Activated CD8-positive, alpha-beta T cell treated with anti-CD3 and anti-CD28 coated beads for 36 hours (primary cell): ENCODE measurements at regions of chr11 and their contacts with region 1.

Region 1: DNA sequence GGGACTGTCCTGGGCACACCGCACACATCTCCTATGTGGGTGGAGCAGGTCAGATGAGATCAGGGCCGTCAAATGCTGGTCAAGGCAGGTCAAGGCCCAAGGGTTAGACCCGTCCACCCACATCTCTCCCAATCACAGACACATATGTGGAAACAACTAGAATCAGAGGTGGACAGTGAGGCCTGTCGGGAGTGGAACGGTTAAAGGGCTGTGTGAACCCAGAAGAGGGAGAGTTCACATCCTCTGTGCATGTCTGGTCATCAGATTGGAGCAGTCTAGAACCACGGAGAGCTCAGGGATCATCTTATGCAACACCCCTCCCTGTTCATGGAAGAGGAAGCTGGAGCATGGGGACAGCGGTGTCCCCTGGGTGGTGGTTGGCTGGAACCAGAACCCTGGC is 5.9 kb downstream of the ARL2 start:
- DNase-seq: no peak
- ATAC-seq: no peak
- H3K4me3 Mint-ChIP-seq: no peak overlapping the region
- H3K27ac Mint-ChIP-seq: no peak overlapping the region
- H3K4me1 Mint-ChIP-seq: peaks cover 17% of the 10 kb centered on the region
- H3K27me3 Mint-ChIP-seq: no peaks in the 10 kb centered on the region
- CTCF ChIP-seq: no peak

Region 2: DNA sequence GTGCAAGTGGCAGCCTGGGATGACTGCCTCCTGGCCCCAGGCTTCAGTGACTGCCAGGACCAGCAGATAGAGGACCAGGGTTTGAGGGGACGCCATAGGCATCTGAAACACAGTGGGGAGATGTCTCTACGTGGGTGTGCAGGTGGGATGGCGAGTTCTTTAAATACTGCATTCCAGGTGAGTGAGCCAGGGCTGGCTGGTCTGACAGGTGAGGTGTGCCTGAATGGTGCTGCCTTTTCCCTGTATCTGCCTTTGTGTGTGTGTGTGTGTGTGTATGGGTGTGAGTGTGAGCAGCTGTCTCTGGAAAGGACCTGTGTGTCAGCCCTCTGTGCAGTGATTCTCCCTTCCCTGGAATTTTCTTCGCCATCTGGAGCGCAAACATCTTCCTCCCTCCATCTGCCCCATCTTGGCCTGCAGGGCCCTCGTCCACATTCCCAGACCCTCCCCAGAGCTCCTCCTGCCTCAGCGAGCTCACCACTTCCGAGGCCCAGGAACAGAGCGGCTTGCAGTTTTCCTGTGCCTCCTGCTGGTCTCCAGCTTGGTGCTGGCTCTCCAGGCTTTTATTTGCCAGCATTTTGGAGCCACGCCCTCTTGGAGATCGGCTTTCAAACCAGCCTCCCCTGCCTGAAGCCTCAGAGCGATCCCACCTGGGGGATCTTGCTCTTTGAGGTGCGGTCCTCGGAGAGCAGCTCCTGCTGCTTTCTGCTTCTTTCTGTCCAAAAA is 84.3 kb before region 1 on chr11 and contains the start of gene GPHA2:
- CTCF ChIA-PET with region 1: no interaction called
- POLR2A ChIA-PET with region 1: no interaction called
- intact Hi-C with region 1: no loop called
- DNase-seq: no peak
- ATAC-seq: no peak
- H3K4me3 Mint-ChIP-seq: no peak within 1 kb of the TSS
- H3K27ac Mint-ChIP-seq: no peak within 1 kb of the TSS
- H3K4me1 Mint-ChIP-seq: no peaks in the 10 kb centered on the region
- H3K27me3 Mint-ChIP-seq: peaks cover 2% of the 10 kb centered on the region
- CTCF ChIP-seq: no peak
- total RNA-seq, gene GPHA2: not detected

Region 3: GRCh38 chr11:64951529-64951928 is 68.3 kb before region 1 on chr11:
- CTCF ChIA-PET with region 1: no interaction called
- POLR2A ChIA-PET with region 1: no interaction called
- intact Hi-C with region 1: no loop called
- DNase-seq: no peak
- ATAC-seq: no peak
- H3K4me3 Mint-ChIP-seq: no peak overlapping the region
- H3K27ac Mint-ChIP-seq: no peak overlapping the region
- H3K4me1 Mint-ChIP-seq: no peaks in the 10 kb centered on the region
- H3K27me3 Mint-ChIP-seq: peaks cover 7% of the 10 kb centered on the region
- CTCF ChIP-seq: no peak

Region 4: DNA sequence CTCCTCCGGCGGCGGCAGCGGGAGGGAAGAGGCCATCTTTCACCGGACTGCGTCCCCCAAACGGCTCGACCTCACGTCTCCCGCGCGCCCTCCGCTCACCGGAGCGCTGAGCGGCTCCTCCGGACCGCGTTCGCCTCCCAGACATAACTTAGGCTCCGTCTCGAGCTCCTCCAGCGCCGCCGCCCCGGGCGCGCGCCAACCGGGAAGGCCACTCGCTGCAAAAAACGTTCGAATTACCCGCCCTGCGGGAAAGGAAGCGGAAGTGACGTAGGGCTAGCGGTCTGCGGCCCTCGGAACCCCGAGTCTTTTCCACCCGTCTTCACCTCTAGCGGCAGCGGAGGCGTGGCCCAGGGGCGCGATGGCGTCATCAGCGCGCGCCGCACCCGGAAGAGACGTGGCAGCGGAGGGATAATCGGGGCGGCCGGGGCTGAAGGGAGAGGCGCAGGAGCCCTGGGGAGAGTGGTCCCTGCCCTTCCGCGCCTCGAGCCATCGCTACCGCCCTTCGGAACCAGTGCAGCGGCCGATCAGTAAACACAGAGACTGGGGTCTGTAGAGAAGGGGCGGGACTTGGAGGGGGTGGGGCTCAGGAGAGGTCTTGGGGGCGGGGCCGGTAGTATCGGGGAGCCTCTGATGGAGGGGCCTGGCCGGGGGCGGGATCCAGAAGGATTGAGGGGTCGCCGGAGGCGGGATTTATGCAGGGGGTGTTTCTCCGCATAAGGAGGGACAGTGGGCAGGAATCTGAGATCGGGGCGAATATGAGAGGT is 64.2 kb after region 1 on chr11 and contains the starts of genes CDCA5 and ZFPL1:
- CTCF ChIA-PET with region 1: interaction called, 10 read pairs
- POLR2A ChIA-PET with region 1: interaction called, 7 read pairs
- intact Hi-C with region 1: loop called (anchors 5 kb)
- DNase-seq: peak; percentile 96
- ATAC-seq: peak; percentile 82
- H3K4me3 Mint-ChIP-seq: peak within 1 kb of the TSS; percentile 99
- H3K27ac Mint-ChIP-seq: peak within 1 kb of the TSS; percentile 98
- H3K4me1 Mint-ChIP-seq: peaks cover 35% of the 10 kb centered on the region
- H3K27me3 Mint-ChIP-seq: no peaks in the 10 kb centered on the region
- CTCF ChIP-seq: no peak
- total RNA-seq, gene CDCA5: 112 TPM
- total RNA-seq, gene ZFPL1: 27.1 to 28.2 TPM